ENCODE measurements at regions of chr6 and their contacts with region 1.

Region 1: DNA sequence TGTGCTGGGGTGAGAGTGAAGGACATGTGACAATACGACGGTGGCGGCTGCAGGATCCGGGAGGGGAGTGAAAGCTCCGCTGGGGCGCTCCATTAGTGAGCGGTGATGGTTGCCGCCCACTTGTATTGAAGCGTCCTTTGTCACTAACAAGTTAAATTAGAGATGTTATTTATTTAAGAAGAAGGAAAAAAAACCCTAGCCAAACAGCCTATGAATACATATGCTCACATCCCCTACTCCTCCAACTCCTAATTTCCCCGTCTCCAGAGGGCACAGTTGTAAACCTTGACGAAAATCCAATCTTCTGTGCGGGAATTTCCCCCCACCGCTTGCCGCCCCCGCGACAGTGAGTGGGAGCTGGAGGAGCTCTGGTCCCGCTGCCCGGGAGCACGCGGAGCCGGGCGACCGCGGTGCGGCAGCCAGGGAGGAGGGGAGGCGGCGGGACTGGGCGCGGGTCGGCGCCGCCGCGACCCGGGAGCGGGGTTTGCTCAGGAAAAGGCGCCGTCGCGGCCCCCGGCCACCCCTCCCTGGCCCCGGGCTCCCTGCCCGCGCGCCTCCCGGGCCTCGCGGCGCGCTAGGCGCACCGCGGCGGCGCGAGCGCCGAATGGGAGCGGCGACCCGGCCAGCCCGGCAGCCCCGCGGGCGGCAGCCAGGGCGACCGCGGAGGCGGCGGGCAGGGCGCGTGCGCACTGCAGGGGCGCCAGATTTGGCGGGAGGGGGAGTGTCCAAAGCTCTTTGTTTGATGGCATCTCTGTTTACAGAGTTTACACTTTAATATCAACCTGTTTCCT is at the start of gene MYB:
- DNase-seq: peak; percentile 89 to 94
- H3K4me3 ChIP-seq: peak within 1 kb of the TSS; percentile 46
- H3K4me1 ChIP-seq: peaks cover 2% of the 10 kb centered on the region; the same call in 1 of the 2 replicates
- H3K27me3 ChIP-seq: no peaks in the 10 kb centered on the region

Region 2: GRCh38 chr6:135423649-135424128 is 243.0 kb after region 1 on chr6:
- in situ Hi-C with region 1: loop called (anchors 25 kb)
- DNase-seq: peak; percentile 27 to 50
- H3K4me3 ChIP-seq: no peak overlapping the region
- H3K4me1 ChIP-seq: peaks cover 12% of the 10 kb centered on the region
- H3K27me3 ChIP-seq: no peaks in the 10 kb centered on the region